ENCODE measurements at regions of chr10 and their contacts with region 1.

Region 1: GRCh38 chr10:112532189-112532588 is 85.2 kb downstream of the VTI1A start:
- DNase-seq: peak; percentile 13
- ATAC-seq: peak; percentile 92
- H3K4me3 Mint-ChIP-seq: no peak overlapping the region
- H3K27ac Mint-ChIP-seq: no peak overlapping the region
- H3K4me1 Mint-ChIP-seq: peaks cover 32% of the 10 kb centered on the region
- H3K27me3 Mint-ChIP-seq: peaks cover 2% of the 10 kb centered on the region

Region 2: GRCh38 chr10:112519129-112519761 is 12.9 kb before region 1 on chr10:
- CTCF ChIA-PET with region 1: interaction called, 4 read pairs
- POLR2A ChIA-PET with region 1: no interaction called
- intact Hi-C with region 1: loop called (anchors 1 kb)
- DNase-seq: peak; percentile 44
- ATAC-seq: peak; percentile 99
- H3K4me3 Mint-ChIP-seq: no peak overlapping the region
- H3K27ac Mint-ChIP-seq: no peak overlapping the region
- H3K4me1 Mint-ChIP-seq: peaks cover 14% of the 10 kb centered on the region
- H3K27me3 Mint-ChIP-seq: no peaks in the 10 kb centered on the region

Region 3: DNA sequence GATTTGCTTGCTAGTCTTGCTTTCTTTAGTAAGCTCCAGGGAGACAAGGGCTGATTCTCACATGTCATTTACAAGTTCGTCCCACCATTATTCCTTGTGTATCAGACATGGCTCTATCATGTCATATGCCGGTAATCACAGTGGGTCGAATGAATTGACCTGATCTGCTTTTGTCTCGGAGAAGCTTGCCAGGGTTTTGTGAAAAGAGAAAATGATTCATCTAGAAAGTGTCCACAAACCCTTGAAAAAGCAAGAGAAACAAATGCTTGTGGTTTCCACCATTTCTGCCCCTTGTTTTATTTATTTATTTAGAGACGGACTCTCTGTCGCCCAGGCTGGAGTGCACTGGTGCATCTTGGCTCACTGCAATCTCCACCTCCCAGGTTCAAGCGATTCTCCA is 696.3 kb after region 1 on chr10:
- CTCF ChIA-PET with region 1: no interaction called
- POLR2A ChIA-PET with region 1: no interaction called
- intact Hi-C with region 1: loop called in 1 of 2 experiments (anchors 5 kb)
- DNase-seq: no peak
- ATAC-seq: no peak
- H3K4me3 Mint-ChIP-seq: no peak overlapping the region
- H3K27ac Mint-ChIP-seq: no peak overlapping the region
- H3K4me1 Mint-ChIP-seq: peaks cover 21% of the 10 kb centered on the region
- H3K27me3 Mint-ChIP-seq: peaks cover 36% of the 10 kb centered on the region